ENCODE measurements at regions of chr2 and their contacts with region 1.

Region 1: DNA sequence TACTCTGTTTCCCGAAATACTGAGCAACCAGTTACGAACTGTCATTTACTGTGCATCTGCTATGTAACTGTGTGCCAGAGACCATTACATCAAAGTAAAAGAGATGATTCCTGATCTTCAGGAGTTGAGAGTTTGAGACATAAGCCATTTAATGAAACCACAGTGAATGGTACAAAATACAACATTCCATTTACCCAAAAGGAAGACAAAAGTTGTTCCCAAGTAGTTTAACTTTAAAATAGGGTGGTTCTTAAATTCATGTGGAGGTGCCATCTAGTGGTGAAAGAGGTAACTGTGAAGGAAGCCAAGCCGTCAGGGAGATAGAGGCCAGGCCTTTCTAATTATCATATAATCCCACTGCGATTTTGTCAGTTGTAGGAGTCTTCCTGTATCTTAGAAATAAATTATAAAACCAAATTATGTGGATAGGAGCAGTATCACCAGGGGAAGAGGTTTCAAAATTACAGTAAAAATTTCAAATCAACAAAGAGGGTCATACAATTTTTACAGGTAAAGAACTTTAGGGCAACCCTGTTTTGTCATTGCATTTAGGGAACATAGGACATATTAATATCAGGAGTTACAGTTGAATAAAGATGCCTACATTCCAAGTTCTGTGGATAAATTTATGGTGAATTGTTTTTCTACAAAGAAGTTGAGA is 67.7 kb downstream of the EPAS1 start:
- DNase-seq: peak in 1 of 2 donors; percentile 65
- ATAC-seq: peak in 7 of 8 donors; percentile 13 to 61 (median 53)
- H3K4me3 ChIP-seq: no peak overlapping the region
- H3K27ac ChIP-seq: peak overlapping the region in 7 of 10 donors; percentile 8 to 71 (median 37)
- H3K4me1 ChIP-seq: peaks cover 0 to 93% (median 41%) of the 10 kb centered on the region in 9 donors
- H3K27me3 ChIP-seq: no peaks in the 10 kb centered on the region
- CTCF ChIP-seq: peak; percentile 74 to 88 (median 83)

Region 2: GRCh38 chr2:45993476-45993991 is 371.4 kb before region 1 on chr2:
- intact Hi-C with region 1: loop called in 1 of 10 experiments (anchors 5 kb)
- DNase-seq: peak in 1 of 2 donors; percentile 83
- ATAC-seq: peak; percentile 34 to 83 (median 65)
- H3K4me3 ChIP-seq: no peak overlapping the region
- H3K27ac ChIP-seq: no peak overlapping the region
- H3K4me1 ChIP-seq: peaks cover 2 to 29% (median 20%) of the 10 kb centered on the region in 9 donors
- H3K27me3 ChIP-seq: no peaks in the 10 kb centered on the region
- CTCF ChIP-seq: peak; percentile 57 to 91 (median 85)

Region 3: GRCh38 chr2:46010925-46011490 is 353.9 kb before region 1 on chr2:
- intact Hi-C with region 1: loop called (anchors 1 to 10 kb)
- DNase-seq: no peak
- ATAC-seq: peak in 5 of 8 donors; percentile 45 to 77 (median 60)
- H3K4me3 ChIP-seq: no peak overlapping the region
- H3K27ac ChIP-seq: peak overlapping the region in 2 of 10 donors; percentile 19 to 22
- H3K4me1 ChIP-seq: peaks cover 0 to 43% (median 19%) of the 10 kb centered on the region in 9 donors
- H3K27me3 ChIP-seq: no peaks in the 10 kb centered on the region
- CTCF ChIP-seq: peak; percentile 21 to 81 (median 72)

Region 4: DNA sequence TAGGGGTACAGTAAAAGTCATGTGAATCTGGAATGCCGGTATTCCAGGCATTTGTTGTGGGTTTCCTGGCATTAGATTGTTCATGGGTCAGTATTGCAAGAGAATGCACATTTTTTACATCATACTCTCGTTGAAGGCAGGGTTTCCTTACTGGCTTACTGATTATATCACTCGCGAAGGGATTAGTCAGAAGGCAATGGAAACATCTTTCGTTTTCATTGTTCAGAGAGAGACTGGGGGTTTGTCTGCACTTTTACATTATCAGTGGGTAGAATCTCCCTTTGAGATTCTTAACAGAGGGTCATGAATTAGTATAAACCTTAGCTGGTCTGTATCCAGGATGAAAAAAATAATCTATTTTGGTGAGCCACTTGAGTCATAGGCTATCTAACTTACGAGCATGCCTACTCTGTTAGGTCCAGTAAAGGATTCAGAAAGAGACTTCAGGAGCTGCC is 297.0 kb before region 1 on chr2:
- intact Hi-C with region 1: loop called in 7 of 10 experiments (anchors 5 to 10 kb)
- DNase-seq: no peak
- ATAC-seq: peak; percentile 37 to 80 (median 72)
- H3K4me3 ChIP-seq: no peak overlapping the region
- H3K27ac ChIP-seq: peak overlapping the region in 8 of 10 donors; percentile 19 to 83 (median 52)
- H3K4me1 ChIP-seq: peaks cover 2 to 61% (median 29%) of the 10 kb centered on the region in 9 donors
- H3K27me3 ChIP-seq: no peaks in the 10 kb centered on the region
- CTCF ChIP-seq: no peak

Region 5: DNA sequence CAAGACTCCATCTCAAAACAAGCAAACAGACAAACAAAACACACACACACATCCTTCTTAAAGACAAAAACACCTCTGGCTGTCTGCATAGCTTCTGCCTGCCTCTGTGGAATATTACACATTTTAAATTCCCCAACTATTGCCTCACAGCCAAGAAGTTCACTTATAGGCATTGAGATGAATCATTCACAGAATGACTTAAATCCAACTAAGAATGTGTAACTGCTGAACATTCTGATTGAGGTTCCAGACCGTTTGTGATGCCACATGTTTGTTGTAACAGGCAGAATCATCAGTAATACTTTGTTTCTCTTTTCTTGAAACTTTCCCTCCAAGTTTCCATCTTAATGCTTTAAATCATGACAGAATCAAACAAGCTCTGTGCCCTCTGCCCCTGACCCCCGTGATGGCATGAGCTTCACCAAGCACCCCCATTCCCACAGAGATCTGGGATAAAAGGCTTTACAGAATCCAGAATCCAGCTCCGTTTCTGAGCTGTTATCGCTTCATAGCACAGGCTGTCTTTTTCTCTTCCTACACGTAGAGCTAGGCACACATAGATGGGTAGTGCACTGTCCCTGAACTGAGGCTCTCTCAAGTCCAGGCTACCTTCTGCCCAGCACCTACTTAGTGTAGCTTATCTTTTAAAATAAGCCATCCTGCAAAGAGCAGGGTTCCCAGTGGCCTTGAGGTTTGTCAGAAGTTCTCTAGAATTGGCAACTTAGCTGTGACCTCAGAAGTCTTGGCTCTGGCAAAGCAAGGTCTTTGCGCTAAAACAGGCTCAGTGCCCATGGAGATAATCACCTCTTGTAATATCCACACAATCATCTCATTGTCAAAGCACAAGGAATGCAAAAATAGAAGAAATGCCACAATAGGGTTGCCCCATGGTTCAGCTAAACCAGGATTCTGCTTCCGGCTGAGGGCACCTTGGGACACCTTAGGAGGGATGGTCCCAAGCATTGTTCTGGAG is 34.8 kb before region 1 on chr2:
- intact Hi-C with region 1: no loop called
- DNase-seq: no peak
- ATAC-seq: no peak
- H3K4me3 ChIP-seq: no peak overlapping the region
- H3K27ac ChIP-seq: peak overlapping the region in 9 of 10 donors; percentile 26 to 91 (median 72)
- H3K4me1 ChIP-seq: peaks cover 59 to 100% (median 98%) of the 10 kb centered on the region in 9 donors
- H3K27me3 ChIP-seq: no peaks in the 10 kb centered on the region
- CTCF ChIP-seq: no peak

Region 6: GRCh38 chr2:46344706-46345105 is 20.2 kb before region 1 on chr2:
- intact Hi-C with region 1: loop called in 1 of 10 experiments (anchors 2 kb)
- DNase-seq: no peak
- ATAC-seq: no peak
- H3K4me3 ChIP-seq: no peak overlapping the region
- H3K27ac ChIP-seq: peak overlapping the region in 5 of 10 donors; percentile 18 to 79 (median 47)
- H3K4me1 ChIP-seq: peaks cover 30 to 100% (median 97%) of the 10 kb centered on the region in 9 donors
- H3K27me3 ChIP-seq: no peaks in the 10 kb centered on the region
- CTCF ChIP-seq: no peak